Lower leg skin (tissue), 4 donors: ENCODE measurements at regions of chr13 and their contacts with region 1.

Region 1: DNA sequence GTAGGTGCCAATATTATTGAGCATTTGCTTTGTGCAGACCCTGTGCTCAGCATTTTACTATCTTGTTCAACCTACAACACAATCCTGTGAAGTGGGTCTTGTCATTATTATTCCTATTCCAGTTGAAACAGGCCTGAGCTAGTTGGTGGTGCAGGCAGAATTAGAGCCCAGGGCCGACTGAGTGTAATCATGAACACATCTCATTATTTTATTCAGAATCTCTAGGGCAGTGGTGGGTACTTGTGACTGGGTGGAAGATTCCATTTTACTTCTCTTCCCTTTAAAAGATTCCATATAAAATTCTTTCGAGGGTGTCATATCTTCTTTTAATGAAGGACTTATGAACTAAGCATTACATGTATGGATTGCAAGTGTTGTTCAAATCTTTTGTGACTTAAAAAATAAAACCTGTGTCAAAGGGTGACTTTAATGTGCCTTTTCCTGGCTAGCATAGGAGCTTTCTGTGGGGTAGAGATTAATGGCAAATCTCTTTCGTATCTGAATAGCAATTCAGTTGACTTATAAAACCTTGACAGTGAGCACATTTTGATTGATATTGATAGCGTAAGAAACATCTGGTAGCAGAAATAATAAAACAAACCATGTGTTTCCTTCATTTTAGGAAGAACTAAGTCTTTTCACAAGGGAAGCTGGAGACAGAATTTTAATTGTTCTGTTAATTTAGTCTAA is 20.3 kb downstream of the B3GLCT start:
- DNase-seq: no peak
- H3K4me3 ChIP-seq: no peak overlapping the region
- CTCF ChIP-seq: no peak
- POLR2A ChIP-seq: no peak

Region 2: GRCh38 chr13:32878172-32878571 is 1658.1 kb after region 1 on chr13:
- intact Hi-C with region 1: loop called (anchors 5 kb)
- DNase-seq: no peak
- H3K4me3 ChIP-seq: no peak overlapping the region
- CTCF ChIP-seq: no peak
- POLR2A ChIP-seq: no peak